Naive thymus-derived CD8-positive, alpha-beta T cell (primary cell): ENCODE measurements at regions of chr15 and their contacts with region 1.

Region 1: GRCh38 chr15:90065682-90066049 is 36.6 kb downstream of the IDH2 start:
- DNase-seq: no peak
- ATAC-seq: no peak
- H3K4me3 Mint-ChIP-seq: no peak overlapping the region
- H3K27ac Mint-ChIP-seq: no peak overlapping the region
- H3K4me1 Mint-ChIP-seq: peaks cover 9 to 42% (median 18%) of the 10 kb centered on the region in 4 donors
- H3K27me3 Mint-ChIP-seq: no peaks in the 10 kb centered on the region

Region 2: DNA sequence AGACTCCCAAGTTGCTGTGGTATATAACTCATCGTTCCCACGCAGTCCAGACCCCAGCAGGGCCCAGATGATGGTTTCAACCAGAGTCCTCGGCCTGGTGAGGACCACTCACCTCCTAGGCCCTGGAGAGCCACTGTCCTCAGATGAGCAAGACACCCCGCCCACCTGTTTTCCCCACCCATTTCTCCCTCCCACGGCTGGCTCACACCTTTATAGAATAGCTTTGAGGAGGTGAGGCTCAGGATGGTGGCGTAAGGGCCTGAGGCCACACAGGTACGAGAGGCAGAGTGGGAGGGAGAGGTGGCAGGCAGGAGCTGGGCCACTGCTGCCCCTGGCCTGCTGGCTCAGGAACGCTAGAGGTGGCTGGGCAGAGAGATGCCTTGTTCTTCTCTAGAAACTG is 322.0 kb before region 1 on chr15:
- POLR2A ChIA-PET with region 1: interaction called, 11 read pairs
- DNase-seq: no peak
- ATAC-seq: no peak
- H3K4me3 Mint-ChIP-seq: no peak overlapping the region
- H3K27ac Mint-ChIP-seq: no peak overlapping the region
- H3K4me1 Mint-ChIP-seq: peaks cover 0 to 3% (median 2%) of the 10 kb centered on the region in 4 donors
- H3K27me3 Mint-ChIP-seq: peaks cover 0 to 5% (median 0%) of the 10 kb centered on the region in 5 donors